ENCODE measurements at regions of chr6 and their contacts with region 1.

Region 1: DNA sequence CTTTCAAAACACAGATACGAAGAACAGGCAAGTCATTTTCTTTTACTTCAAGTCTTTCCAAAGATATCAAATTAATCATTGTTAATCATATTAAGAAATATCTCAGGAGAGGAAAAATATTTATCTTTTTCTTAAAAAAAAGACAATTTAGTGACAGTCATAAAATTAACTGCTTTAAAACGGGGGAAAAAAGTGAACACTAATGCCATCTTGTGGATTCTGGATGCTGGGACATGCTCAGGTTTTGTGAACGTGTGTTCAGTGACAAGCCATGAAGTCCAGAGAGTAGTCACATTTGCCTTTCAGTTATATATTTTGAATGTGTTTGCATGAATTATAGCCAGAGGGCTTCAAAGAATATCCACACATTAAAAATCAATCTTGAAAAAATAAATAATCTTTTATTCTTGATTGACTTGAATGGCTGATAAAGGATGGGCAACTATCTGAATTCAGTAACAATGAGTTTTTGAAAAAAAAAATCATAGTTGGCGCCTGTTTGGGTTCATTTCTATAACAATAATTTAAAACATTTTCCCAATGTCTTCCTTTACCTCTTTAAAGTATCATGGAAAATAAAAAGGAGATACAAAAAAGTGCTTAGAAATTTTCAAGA is 74.7 kb upstream of the NOX3 start:
- DNase-seq: peak; percentile 77
- H3K4me3 ChIP-seq: no peak overlapping the region
- H3K27ac ChIP-seq: peak overlapping the region; percentile 83
- H3K4me1 ChIP-seq: peaks cover 16% of the 10 kb centered on the region
- H3K27me3 ChIP-seq: no peaks in the 10 kb centered on the region
- CTCF ChIP-seq: peak; percentile 55 to 60
- POLR2A ChIP-seq: no peak

Region 2: DNA sequence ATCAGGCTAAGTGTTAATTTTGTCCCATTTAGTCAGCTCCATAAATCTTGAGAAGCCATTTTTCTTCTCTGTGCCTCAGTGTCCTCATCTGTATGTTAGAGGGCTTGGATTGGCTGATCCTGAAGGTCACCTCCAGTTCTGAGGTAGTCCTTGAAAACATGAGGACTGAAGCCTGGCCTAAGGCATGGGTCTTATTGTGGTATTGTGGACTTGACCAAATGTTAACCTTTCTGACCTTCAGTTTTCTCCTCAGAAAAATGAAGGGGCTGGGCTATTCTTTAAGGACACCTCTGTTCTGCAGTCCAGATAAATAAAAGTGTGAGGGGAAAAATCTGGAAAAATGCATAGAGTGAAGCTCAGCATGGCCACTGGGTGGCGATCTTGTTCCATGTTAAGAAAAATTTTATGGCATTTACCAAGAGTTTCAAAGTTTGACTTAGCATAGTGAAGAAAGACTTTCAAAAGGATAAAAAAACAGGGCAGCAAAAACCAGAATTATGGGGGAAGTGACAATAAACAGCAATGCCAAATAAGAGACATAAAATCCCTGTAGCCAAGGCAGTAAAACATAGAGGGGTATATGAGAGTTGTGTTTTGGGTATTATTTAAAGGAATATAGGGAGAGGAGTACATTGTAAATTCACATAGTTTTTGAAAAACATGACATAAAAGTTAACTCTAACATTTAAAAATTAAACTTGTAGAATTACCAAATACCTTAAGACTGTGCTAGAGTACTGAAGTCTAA is 202.8 kb before region 1 on chr6:
- CTCF ChIA-PET with region 1: interaction called, 56 read pairs
- POLR2A ChIA-PET with region 1: no interaction called
- dilution Hi-C with region 1: no loop called
- intact Hi-C with region 1: loop called (anchors 1 kb)
- DNase-seq: peak; percentile 84
- H3K4me3 ChIP-seq: no peak overlapping the region
- H3K27ac ChIP-seq: peak overlapping the region; percentile 7
- H3K4me1 ChIP-seq: peaks cover 9% of the 10 kb centered on the region
- H3K27me3 ChIP-seq: no peaks in the 10 kb centered on the region
- CTCF ChIP-seq: peak; percentile 50 to 58
- POLR2A ChIP-seq: no peak

Region 3: DNA sequence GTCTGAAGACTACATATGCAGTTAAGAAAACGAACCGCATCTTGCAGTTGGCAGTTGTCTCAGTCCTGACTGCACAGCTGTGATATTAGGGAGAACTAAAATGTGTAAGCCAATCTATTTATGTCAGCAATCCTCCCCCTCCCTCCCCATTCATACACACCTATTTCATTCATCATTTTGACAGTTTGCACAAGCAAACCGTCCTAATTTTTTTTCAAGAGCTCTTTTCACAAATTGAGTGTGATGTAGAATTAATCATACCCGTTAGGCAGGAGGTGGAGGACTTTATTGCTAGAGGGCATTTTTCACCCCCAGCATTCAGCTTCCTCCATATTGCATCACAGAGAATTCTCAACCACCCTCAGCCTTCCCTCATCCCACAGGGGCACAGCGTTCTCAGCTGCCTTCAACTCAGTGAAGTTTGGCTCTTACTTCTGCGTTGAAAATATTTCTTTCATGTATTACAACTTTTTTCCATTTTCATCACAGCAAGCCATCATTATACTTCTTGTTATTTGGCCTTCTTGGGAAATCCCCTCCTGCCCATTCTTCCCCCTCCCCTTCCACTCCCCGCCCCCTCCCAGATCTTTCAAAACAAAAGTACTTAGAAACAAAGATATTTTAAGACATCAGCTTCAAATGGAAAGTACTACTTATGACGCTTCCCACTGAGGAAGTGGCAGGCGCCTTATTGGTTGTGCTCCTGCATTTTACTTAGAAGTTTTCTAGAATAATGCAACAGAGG is 112.1 kb before region 1 on chr6:
- CTCF ChIA-PET with region 1: interaction called, 4 read pairs
- POLR2A ChIA-PET with region 1: no interaction called
- dilution Hi-C with region 1: no loop called
- intact Hi-C with region 1: loop called (anchors 5 kb)
- DNase-seq: peak; percentile 91
- H3K4me3 ChIP-seq: no peak overlapping the region
- H3K27ac ChIP-seq: peak overlapping the region; percentile 15
- H3K4me1 ChIP-seq: peaks cover 4% of the 10 kb centered on the region
- H3K27me3 ChIP-seq: no peaks in the 10 kb centered on the region
- CTCF ChIP-seq: no peak
- POLR2A ChIP-seq: no peak

Region 4: GRCh38 chr6:155543166-155543847 is 13.0 kb after region 1 on chr6:
- CTCF ChIA-PET with region 1: interaction called, 11 read pairs
- POLR2A ChIA-PET with region 1: no interaction called
- dilution Hi-C with region 1: no loop called
- intact Hi-C with region 1: no loop called
- DNase-seq: peak; percentile 72
- H3K4me3 ChIP-seq: no peak overlapping the region
- H3K27ac ChIP-seq: no peak overlapping the region
- H3K4me1 ChIP-seq: no peaks in the 10 kb centered on the region
- H3K27me3 ChIP-seq: no peaks in the 10 kb centered on the region
- CTCF ChIP-seq: no peak
- POLR2A ChIP-seq: no peak

Region 5: GRCh38 chr6:156167625-156168071 is 637.3 kb after region 1 on chr6:
- CTCF ChIA-PET with region 1: no interaction called
- POLR2A ChIA-PET with region 1: no interaction called
- dilution Hi-C with region 1: no loop called
- intact Hi-C with region 1: loop called (anchors 5 kb)
- DNase-seq: peak; percentile 98
- H3K4me3 ChIP-seq: peak overlapping the region in 1 of 3 experiments; percentile 18
- H3K27ac ChIP-seq: peak overlapping the region; percentile 68
- H3K4me1 ChIP-seq: peaks cover 17% of the 10 kb centered on the region
- H3K27me3 ChIP-seq: no peaks in the 10 kb centered on the region
- CTCF ChIP-seq: no peak
- POLR2A ChIP-seq: peak; percentile 24